Ascending aorta (tissue), 2 donors: ENCODE measurements at regions of chr19 and their contacts with region 1.

Region 1: DNA sequence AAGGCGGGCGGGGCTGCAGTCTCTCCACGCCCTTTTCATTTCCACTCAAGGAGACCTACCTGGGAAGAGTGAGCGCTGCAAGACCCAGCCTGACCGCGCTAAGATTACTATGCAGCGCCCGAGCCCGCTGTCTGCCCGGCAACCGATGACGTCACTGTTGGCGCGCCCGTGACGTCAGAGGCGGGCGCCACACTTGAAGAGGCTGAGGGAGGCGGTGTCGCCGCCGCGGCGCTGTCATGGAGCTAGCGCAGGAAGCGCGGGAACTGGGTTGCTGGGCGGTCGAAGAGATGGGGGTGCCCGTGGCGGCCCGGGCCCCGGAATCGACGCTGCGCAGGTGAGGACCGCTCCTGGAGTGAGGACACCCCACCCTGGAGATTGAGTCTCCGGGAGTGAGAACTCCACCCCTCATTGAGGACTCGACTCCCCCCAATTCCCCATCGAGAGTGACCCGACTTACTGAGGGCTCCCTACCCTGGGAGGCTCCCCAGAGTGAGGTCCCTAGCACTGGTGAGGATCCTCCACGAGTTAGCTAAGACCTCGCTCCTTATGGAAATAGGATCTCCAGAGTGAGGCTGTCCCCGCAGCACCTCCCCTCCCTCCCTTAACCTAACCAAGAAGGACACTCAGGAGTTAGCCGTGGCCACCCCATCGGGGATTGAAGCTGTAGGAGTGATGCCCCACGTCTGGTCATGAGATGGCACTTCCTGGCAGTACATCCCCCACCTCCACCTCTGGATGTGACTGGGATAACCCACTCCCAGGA is at the start of gene HAUS5:
- DNase-seq: peak; percentile 82 to 98
- H3K4me3 ChIP-seq: peak within 1 kb of the TSS; percentile 70 to 81
- H3K27ac ChIP-seq: peak within 1 kb of the TSS; percentile 64 to 76
- H3K4me1 ChIP-seq: peaks cover 0 to 8% of the 10 kb centered on the region in 2 donors
- H3K27me3 ChIP-seq: no peaks in the 10 kb centered on the region
- CTCF ChIP-seq: peak in 1 of 3 experiments; percentile 8
- total RNA-seq, gene HAUS5: 1.9 TPM

Region 2: DNA sequence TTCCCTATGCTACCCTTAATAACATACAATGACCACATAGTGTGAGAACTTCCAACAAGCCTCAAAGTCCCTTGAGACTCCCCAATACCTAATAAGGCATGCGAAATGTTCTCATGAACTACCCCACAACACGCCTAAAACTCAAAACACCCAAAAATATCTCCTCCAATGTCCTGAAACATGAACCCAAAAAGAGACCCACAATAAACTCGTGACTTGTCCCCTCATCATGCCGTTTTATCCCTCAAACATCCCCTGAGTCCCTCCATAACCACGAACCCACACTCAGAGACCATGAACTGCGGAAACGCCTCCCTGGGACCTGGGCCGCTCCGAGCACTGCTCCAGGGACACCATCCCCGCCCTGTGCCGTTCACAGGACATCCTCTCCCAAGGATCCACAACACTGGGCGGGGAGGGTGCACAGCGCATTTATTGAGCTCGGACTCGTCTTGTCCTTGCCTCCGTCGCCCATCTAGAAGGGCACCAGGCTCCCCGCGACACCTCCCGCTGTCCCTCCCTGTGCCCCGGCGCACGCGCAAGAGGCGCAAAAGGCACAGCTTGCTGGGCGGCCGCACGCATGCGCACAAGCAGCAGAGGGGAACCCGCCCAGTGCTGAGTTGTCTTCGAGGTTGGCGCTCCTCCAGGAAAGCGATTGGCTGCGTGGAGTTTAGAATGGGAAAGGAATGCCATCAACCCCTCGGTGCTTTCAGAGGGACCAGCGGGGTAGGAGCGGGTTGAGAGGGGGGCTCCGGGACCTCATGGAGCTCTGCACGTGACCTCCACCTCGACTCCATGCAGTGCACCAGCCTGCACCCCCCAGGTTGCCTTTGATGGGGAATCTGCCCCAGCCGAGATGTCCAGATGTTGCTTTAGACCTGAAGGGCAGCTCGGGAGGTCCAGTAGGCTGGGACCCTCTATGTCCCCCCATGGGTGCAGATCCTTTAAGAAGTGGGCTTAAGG is 488.4 kb before region 1 on chr19:
- intact Hi-C with region 1: loop called (anchors 10 kb)
- DNase-seq: peak; percentile 80 to 96
- H3K4me3 ChIP-seq: peak overlapping the region; percentile 56 to 64
- H3K27ac ChIP-seq: peak overlapping the region; percentile 80 to 85
- H3K4me1 ChIP-seq: peaks cover 8 to 13% of the 10 kb centered on the region in 2 donors
- H3K27me3 ChIP-seq: no peaks in the 10 kb centered on the region
- CTCF ChIP-seq: no peak

Region 3: GRCh38 chr19:35569281-35569781 is 43.4 kb before region 1 on chr19:
- intact Hi-C with region 1: no loop called
- DNase-seq: peak in 1 of 2 donors; percentile 34
- H3K4me3 ChIP-seq: no peak overlapping the region
- H3K27ac ChIP-seq: no peak overlapping the region
- H3K4me1 ChIP-seq: no peaks in the 10 kb centered on the region
- H3K27me3 ChIP-seq: no peaks in the 10 kb centered on the region
- CTCF ChIP-seq: no peak

Region 4: DNA sequence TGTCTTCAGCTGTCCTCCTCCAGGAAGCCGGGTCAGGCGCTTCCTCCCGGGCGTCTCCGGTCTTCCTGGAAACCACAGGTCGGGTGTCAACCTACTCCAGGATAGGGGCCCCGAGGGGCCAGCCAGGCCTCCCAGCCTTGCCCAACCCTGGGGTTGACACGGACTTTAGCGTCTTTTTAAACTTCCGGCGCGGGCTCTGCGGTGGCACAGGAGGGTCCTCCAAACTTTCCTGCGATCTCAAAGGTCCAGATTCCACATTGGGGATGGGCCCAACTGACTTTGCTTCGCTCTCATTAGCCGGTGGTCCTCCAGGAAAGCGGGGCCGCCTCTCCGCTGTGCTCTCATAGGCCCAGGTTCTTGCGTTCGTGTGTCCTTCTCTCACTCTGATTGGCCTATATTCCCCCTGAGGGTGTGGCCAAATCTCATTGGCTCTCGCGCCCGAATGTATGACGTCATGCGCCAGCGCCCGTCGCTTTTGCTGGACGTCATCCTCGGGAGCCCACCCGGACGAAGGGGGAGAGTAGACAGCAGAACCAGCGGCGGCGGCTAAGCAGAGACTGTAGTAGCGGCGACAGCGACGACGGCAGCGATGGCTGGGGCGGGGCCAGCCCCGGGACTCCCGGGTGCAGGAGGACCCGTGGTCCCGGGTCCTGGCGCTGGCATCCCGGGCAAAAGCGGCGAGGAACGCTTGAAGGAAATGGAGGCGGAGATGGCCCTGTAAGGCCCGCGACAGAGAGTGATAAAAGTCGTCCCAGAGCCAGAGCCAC is 16.0 kb after region 1 on chr19 and contains the start of gene RBM42:
- intact Hi-C with region 1: loop called (anchors 1 kb)
- DNase-seq: peak; percentile 95 to 99
- H3K4me3 ChIP-seq: peak within 1 kb of the TSS; percentile 74 to 97
- H3K27ac ChIP-seq: peak within 1 kb of the TSS; percentile 73 to 91
- H3K4me1 ChIP-seq: peaks cover 5 to 10% of the 10 kb centered on the region in 2 donors
- H3K27me3 ChIP-seq: no peaks in the 10 kb centered on the region
- CTCF ChIP-seq: no peak
- total RNA-seq, gene RBM42: 69.0 TPM